ENCODE measurements at regions of chr16 and their contacts with region 1.

Region 1: GRCh38 chr16:24539291-24539849 is at the start of gene RBBP6:
- DNase-seq: peak; percentile 97
- ATAC-seq: peak; percentile 86
- H3K4me3 Mint-ChIP-seq: peak within 1 kb of the TSS; percentile 90
- H3K27ac Mint-ChIP-seq: peak within 1 kb of the TSS; percentile 100
- H3K4me1 Mint-ChIP-seq: peaks cover 20% of the 10 kb centered on the region
- H3K27me3 Mint-ChIP-seq: no peaks in the 10 kb centered on the region
- total RNA-seq, gene RBBP6: 70.7 to 71.1 TPM

Region 2: DNA sequence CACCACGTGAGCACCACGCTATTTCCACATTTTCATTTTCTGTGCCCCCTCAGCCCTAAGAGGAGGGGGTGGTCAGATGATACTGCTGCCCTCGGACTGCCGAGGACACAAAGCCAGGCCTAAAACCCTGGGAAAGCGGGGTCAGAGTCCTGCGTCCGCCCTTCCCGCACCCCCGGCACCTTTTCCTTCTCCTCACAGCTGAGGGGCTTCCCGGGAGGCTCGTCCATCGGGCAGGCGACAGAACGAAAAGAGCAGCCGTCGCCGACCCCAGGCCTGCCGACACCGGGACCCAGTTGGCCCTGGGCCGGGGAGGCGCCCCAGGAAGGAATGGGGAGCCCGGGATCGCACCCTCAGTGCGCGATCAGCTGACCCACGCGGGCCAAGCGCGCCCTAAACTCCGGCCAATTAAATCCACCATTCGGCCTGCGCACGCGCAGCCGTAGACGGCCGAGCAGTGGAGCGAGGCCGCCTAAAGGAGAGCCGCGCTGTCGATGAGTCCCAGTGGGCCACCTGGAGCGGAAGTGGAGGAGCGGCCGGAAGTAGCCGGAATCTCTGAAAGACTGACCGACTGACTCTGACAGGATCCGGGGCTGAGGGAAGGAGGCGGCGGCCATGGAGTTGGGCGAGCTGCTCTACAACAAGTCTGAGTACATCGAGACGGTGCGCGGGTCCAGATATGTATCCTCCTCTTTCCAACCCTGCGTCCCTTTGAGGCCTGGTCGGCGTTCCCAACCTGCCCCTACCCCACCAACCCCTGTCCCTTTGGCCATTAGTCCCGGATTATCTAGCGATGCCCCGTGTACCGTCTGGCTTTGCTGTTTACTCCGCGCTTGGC is 898.2 kb before region 1 on chr16 and contains the starts of genes DCTN5 and PALB2:
- CTCF ChIA-PET with region 1: no interaction called
- POLR2A ChIA-PET with region 1: no interaction called
- intact Hi-C with region 1: loop called in 1 of 2 experiments (anchors 2 kb)
- DNase-seq: peak; percentile 93
- ATAC-seq: peak; percentile 98
- H3K4me3 Mint-ChIP-seq: peak within 1 kb of the TSS; percentile 100
- H3K27ac Mint-ChIP-seq: peak within 1 kb of the TSS; percentile 96
- H3K4me1 Mint-ChIP-seq: peaks cover 34% of the 10 kb centered on the region
- H3K27me3 Mint-ChIP-seq: no peaks in the 10 kb centered on the region
- total RNA-seq, gene DCTN5: 47.1 to 55.8 TPM
- total RNA-seq, gene PALB2: 23.1 to 23.5 TPM

Region 3: DNA sequence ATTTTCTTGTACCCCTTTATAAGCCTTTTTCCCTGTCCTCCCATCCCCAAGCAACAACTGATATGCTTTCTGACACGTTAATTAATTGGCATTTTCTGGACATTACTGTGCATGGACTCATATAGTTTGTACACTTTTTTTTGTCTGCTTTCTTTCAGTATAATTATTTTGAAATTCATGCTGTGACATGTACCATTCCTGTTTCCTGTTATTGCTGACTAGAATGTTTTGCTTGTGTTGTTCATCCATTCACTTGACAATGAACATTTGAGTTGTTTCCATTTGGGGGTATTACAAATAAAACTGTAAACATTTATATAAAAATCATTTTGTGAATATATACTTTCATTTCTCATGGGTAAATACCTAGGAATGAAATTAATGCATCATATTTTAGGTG is 50.6 kb after region 1 on chr16:
- CTCF ChIA-PET with region 1: no interaction called
- POLR2A ChIA-PET with region 1: no interaction called
- intact Hi-C with region 1: no loop called
- DNase-seq: no peak
- ATAC-seq: no peak
- H3K4me3 Mint-ChIP-seq: no peak overlapping the region
- H3K27ac Mint-ChIP-seq: no peak overlapping the region
- H3K4me1 Mint-ChIP-seq: peaks cover 14% of the 10 kb centered on the region
- H3K27me3 Mint-ChIP-seq: peaks cover 22% of the 10 kb centered on the region

Region 4: DNA sequence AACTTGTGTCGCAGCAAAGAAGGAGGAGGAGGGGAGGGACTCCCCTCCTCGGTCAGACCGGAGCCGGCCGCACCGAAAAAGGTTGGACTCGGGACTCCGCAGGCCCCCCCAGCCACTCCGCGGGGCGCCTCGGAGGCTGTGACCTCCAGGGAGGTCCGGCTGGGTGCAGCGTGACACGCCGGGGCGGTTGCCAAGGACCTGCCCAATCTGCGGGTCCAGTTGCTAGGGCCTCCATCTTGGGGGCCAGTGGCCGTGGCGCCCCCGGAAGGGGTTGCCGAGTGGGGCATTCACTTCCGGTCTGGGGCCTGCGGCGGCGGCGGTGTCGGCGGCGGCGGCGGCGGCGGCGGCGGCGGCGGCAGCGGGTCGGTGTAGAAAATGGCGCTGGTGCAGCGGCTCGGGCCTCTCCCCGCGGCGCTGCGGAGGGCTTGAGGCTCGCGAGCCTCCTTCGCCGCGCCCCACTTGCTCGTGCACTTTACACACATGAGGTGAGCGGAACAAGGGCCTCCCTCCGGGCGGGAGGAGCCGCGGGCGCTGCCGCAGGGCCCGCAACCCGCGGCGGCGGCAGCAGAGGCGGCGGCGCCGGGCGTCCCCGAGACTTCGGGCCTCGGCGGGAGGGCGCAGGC is 190.1 kb after region 1 on chr16 and contains the start of gene TNRC6A:
- CTCF ChIA-PET with region 1: no interaction called
- POLR2A ChIA-PET with region 1: interaction called, 10 read pairs
- intact Hi-C with region 1: loop called (anchors 1 to 5 kb)
- DNase-seq: peak; percentile 87
- ATAC-seq: peak; percentile 77
- H3K4me3 Mint-ChIP-seq: peak within 1 kb of the TSS; percentile 99
- H3K27ac Mint-ChIP-seq: peak within 1 kb of the TSS; percentile 99
- H3K4me1 Mint-ChIP-seq: peaks cover 44% of the 10 kb centered on the region
- H3K27me3 Mint-ChIP-seq: no peaks in the 10 kb centered on the region
- total RNA-seq, gene TNRC6A: 34.6 to 46.1 TPM

Region 5: DNA sequence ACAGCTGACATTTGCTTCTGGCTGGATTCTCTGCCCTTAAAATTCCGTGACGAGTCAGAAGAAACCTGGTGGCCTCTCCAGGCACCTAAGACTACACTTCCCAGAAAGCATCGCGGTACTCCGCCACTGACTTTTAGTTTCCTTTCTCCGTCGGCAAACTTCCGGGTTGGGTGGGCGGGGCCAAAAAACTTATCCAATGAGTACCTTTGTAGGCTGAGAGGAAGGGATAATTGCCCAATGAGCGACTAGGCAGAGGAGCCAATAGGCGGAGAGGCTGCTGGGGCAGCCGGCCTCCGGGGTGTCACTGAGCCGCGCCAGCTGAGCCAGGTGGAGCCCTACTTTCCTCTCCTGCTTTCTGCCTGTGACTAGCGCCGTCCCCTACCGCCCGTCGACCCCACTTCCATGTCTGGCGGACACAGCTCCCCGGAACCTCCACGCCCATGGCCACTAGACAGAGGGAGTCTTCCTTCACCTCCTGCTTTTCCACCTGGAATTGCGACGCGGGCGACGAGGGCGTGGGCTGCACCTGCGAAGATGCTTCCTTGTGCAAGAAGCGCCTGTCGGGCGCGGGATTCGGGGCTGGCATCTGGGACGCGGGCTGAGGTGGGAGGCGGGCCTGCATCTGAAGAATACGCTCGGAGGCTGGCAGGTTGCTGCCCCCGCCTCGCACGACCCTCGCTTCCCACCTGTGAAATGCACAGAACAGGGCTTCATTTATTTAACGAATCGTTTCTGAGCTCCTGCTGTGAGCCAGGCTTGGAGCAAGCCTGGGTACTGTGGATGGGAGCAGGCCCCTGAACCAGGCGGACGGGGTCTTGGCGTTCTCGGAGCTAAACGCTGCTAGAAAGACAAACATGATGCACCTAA is 492.3 kb after region 1 on chr16:
- CTCF ChIA-PET with region 1: no interaction called
- POLR2A ChIA-PET with region 1: interaction called, 3 read pairs
- intact Hi-C with region 1: loop called in 1 of 2 experiments (anchors 2 kb)
- DNase-seq: peak; percentile 93
- ATAC-seq: peak; percentile 97
- H3K4me3 Mint-ChIP-seq: peak overlapping the region; percentile 75
- H3K27ac Mint-ChIP-seq: peak overlapping the region; percentile 100
- H3K4me1 Mint-ChIP-seq: peaks cover 46% of the 10 kb centered on the region
- H3K27me3 Mint-ChIP-seq: no peaks in the 10 kb centered on the region

Region 6: GRCh38 chr16:25257504-25257955 is 718.2 kb after region 1 on chr16 and contains the start of gene ZKSCAN2:
- CTCF ChIA-PET with region 1: no interaction called
- POLR2A ChIA-PET with region 1: no interaction called
- intact Hi-C with region 1: loop called in 1 of 2 experiments (anchors 1 kb)
- DNase-seq: peak; percentile 92
- ATAC-seq: peak; percentile 82
- H3K4me3 Mint-ChIP-seq: peak within 1 kb of the TSS; percentile 93
- H3K27ac Mint-ChIP-seq: peak within 1 kb of the TSS; percentile 98
- H3K4me1 Mint-ChIP-seq: peaks cover 59% of the 10 kb centered on the region
- H3K27me3 Mint-ChIP-seq: no peaks in the 10 kb centered on the region
- total RNA-seq, gene ZKSCAN2: 5.5 to 5.6 TPM

Measured in activated CD4-positive, alpha-beta T cell treated with anti-CD3 and anti-CD28 coated beads for 36 hours (primary cell).